ENCODE measurements at regions of chr11 and their contacts with region 1.

Region 1: DNA sequence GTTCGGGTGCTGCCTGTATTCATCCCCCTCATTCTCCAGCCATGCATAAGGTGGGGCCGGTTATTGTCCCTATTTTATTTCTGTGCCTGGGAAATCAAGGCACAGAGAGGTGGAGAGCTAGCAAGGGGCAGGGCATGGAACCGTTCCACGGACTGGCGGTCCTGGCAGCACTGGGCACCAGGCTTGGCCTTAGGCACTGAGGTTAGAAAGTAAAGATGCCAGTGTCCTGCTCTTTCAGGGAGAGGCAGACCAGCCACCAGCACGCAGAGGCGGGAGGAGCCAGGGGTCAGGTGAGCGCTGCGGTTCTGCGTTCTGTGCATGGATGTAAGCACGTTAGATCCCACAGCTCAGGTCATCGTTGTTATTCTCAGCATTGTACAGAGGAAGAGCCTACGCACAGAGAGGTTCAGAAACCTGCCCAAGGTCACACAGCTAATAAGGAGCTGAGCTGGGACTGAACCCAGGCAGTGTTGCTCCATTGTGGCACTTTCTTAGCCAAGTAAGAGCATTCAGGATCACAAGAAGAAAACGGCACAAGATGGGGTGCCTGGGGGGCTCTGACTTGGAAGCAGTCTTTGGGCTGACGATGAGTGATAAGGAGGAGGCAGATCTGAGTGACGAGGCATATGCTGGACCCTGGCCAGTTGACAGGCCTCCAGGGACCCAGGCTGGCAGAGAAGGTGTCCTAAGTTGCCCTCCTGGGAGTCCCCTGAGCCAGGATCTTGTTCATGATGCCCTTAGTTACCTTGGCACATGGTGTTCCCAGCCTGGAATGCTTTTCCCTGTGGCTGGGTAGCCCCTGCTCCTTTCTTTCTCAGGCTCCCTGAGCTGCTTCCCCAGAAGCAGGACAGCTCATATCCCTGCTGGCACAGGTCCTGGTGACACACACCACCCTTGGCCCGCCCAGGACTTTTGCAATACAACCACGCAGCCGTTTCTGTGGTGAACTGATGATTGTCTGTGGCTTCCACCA is 41.1 kb downstream of the OSBPL5 start:
- DNase-seq: peak; percentile 90 to 93
- ATAC-seq: peak; percentile 89 to 90
- H3K4me3 ChIP-seq: no peak overlapping the region
- H3K27ac ChIP-seq: peak overlapping the region; percentile 73 to 85 (median 78)
- H3K4me1 ChIP-seq: peaks cover 33 to 44% of the 10 kb centered on the region in 2 donors
- H3K27me3 ChIP-seq: no peaks in the 10 kb centered on the region
- CTCF ChIP-seq: no peak
- POLR2A ChIP-seq: no peak

Region 2: DNA sequence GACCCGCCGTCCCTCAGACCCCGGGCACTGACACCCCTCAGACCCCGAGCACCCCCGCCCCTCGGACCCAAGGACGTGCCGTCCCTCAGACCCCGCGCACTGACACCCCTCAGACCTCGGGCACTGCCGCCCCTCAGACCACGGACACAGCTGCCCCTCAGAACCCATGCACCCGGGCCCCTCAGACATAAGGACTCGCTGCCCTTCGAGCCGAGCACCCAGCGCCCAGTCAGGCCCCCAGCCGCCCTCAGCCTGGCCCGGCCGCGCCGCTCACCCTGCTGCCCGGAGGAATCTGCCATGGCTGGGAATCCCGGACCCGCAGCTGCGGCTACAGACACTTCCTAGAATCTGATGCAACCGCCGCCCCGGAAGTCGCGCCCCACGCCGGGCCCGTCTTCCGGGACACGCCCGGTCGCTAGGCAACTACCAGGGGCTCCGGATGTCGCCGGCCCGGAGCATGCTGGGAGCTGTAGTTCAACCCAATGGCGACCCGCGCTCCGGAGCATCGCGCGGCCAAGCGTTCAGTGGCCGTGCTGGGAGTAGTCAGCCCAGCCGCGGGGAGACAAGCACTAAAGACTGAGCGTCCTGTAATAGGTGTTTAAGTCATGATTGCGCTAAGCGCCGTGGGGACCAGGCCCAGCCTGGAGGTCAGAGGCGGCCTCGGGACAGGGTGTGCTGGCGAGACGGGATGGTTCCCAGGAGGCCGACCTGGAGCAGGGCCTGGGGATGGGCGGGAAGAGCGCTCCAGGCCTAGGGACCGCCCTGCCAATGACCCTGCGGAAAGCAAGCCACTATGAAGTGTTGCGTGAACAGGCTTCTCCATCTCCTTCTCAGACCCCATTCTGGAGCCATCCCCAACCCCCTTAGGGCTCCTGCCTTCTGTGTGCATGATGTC is 66.7 kb before region 1 on chr11 and contains the start of gene CARS1:
- in situ Hi-C with region 1: no loop called
- intact Hi-C with region 1: loop called (anchors 2 kb)
- DNase-seq: peak; percentile 93 to 95
- ATAC-seq: peak; percentile 93 to 94
- H3K4me3 ChIP-seq: peak within 1 kb of the TSS; percentile 69 to 99 (median 92)
- H3K27ac ChIP-seq: peak within 1 kb of the TSS; percentile 87 to 97 (median 94)
- H3K4me1 ChIP-seq: peaks cover 14 to 22% of the 10 kb centered on the region in 2 donors
- H3K27me3 ChIP-seq: no peaks in the 10 kb centered on the region
- CTCF ChIP-seq: peak in 1 of 5 experiments; percentile 18
- POLR2A ChIP-seq: peak; percentile 77 to 82
- total RNA-seq, gene CARS1: 31.5 to 46.5 (median 34.7) TPM

Region 3: GRCh38 chr11:3160252-3161031 is 36.4 kb after region 1 on chr11:
- in situ Hi-C with region 1: no loop called
- intact Hi-C with region 1: loop called (anchors 2 kb)
- DNase-seq: peak; percentile 68 to 78
- ATAC-seq: peak; percentile 71 to 74
- H3K4me3 ChIP-seq: peak overlapping the region; percentile 57 to 68 (median 64)
- H3K27ac ChIP-seq: peak overlapping the region; percentile 71 to 81 (median 80)
- H3K4me1 ChIP-seq: peaks cover 59 to 67% of the 10 kb centered on the region in 2 donors
- H3K27me3 ChIP-seq: no peaks in the 10 kb centered on the region
- CTCF ChIP-seq: no peak
- POLR2A ChIP-seq: no peak